Heart right ventricle (tissue), 16 donors: ENCODE measurements at regions of chr7 and their contacts with region 1.

Region 1: GRCh38 chr7:139075031-139075652 is 34.4 kb downstream of the ZC3HAV1 start:
- DNase-seq: peak; percentile 34 to 79
- ATAC-seq: peak; percentile 47 to 95 (median 90)
- H3K4me3 ChIP-seq: no peak overlapping the region
- H3K27ac ChIP-seq: peak overlapping the region in 5 of 10 donors; percentile 20 to 52 (median 42)
- H3K4me1 ChIP-seq: peaks cover 0 to 24% (median 5%) of the 10 kb centered on the region in 9 donors
- H3K27me3 ChIP-seq: no peaks in the 10 kb centered on the region
- CTCF ChIP-seq: peak; percentile 74 to 92 (median 84)

Region 2: DNA sequence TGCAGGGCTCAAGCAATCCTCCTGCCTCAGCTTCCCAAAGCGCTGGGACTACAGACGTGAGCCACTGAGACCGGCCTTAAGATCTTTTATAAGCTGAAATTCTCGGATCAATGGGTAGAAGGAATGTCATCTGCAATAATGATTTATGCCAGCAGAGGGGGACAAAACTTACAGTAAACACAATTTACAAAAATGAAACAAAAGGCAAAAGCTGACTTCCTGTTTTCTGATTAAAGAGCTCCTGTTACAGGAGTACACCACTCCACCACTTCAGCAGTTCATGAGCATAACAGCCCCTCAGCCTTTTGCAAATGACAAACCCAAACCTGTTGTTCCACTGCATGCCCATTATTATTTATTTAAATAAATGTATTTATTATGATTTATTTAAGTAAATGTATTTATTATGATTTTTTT is 188.6 kb before region 1 on chr7:
- intact Hi-C with region 1: loop called in 9 of 10 experiments (anchors 5 to 10 kb)
- DNase-seq: peak in 1 of 2 donors; percentile 50
- ATAC-seq: peak in 3 of 8 donors; percentile 21 to 41 (median 30)
- H3K4me3 ChIP-seq: no peak overlapping the region
- H3K27ac ChIP-seq: no peak overlapping the region
- H3K4me1 ChIP-seq: peaks cover 0 to 17% (median 2%) of the 10 kb centered on the region in 9 donors
- H3K27me3 ChIP-seq: no peaks in the 10 kb centered on the region
- CTCF ChIP-seq: peak; percentile 48 to 72 (median 68)

Region 3: GRCh38 chr7:139023076-139023475 is 52.1 kb before region 1 on chr7:
- intact Hi-C with region 1: loop called in 5 of 10 experiments (anchors 5 kb)
- DNase-seq: no peak
- ATAC-seq: no peak
- H3K4me3 ChIP-seq: no peak overlapping the region
- H3K27ac ChIP-seq: no peak overlapping the region
- H3K4me1 ChIP-seq: no peaks in the 10 kb centered on the region
- H3K27me3 ChIP-seq: no peaks in the 10 kb centered on the region
- CTCF ChIP-seq: no peak

Region 4: DNA sequence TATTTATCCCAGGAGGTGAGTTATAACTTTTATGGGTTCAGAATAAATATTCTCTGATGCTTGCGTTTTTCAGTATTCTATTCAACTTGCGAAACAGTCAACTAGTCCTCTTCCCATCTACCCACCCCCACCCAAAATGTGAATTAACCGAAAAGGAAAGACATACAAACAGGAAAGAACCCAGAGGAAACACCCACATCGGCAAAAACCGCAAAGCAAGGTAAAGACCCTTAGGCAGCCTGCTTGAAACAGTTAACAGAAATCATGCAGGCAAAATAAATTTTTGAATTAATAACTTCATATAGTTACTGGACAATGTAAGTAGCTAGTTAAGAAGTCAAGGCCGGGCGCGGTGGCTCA is 28.9 kb after region 1 on chr7:
- intact Hi-C with region 1: loop called in 1 of 10 experiments (anchors 2 kb)
- DNase-seq: no peak
- ATAC-seq: no peak
- H3K4me3 ChIP-seq: peak overlapping the region in 7 of 10 donors; percentile 6 to 99 (median 15)
- H3K27ac ChIP-seq: peak overlapping the region in 8 of 10 donors; percentile 2 to 100 (median 33)
- H3K4me1 ChIP-seq: peaks cover 0 to 77% (median 38%) of the 10 kb centered on the region in 9 donors
- H3K27me3 ChIP-seq: no peaks in the 10 kb centered on the region
- CTCF ChIP-seq: no peak